B cell (primary cell): ENCODE measurements at regions of chr1 and their contacts with region 1.

Region 1: GRCh38 chr1:223123011-223123610 is 19.9 kb downstream of the TLR5 start:
- DNase-seq: no peak
- ATAC-seq: no peak
- H3K4me3 ChIP-seq: peak overlapping the region in 1 of 5 experiments; percentile 18
- H3K4me3 Mint-ChIP-seq: peak overlapping the region; percentile 27
- H3K27ac ChIP-seq: no peak overlapping the region
- H3K27ac Mint-ChIP-seq: no peak overlapping the region
- H3K4me1 ChIP-seq: peaks cover 4 to 5% of the 10 kb centered on the region in 2 donors
- H3K4me1 Mint-ChIP-seq: peaks cover 6% of the 10 kb centered on the region
- H3K27me3 ChIP-seq: peaks cover 0 to 3% (median 0%) of the 10 kb centered on the region in 4 experiments
- H3K27me3 Mint-ChIP-seq: peaks cover 4% of the 10 kb centered on the region
- CTCF ChIP-seq: no peak

Region 2: DNA sequence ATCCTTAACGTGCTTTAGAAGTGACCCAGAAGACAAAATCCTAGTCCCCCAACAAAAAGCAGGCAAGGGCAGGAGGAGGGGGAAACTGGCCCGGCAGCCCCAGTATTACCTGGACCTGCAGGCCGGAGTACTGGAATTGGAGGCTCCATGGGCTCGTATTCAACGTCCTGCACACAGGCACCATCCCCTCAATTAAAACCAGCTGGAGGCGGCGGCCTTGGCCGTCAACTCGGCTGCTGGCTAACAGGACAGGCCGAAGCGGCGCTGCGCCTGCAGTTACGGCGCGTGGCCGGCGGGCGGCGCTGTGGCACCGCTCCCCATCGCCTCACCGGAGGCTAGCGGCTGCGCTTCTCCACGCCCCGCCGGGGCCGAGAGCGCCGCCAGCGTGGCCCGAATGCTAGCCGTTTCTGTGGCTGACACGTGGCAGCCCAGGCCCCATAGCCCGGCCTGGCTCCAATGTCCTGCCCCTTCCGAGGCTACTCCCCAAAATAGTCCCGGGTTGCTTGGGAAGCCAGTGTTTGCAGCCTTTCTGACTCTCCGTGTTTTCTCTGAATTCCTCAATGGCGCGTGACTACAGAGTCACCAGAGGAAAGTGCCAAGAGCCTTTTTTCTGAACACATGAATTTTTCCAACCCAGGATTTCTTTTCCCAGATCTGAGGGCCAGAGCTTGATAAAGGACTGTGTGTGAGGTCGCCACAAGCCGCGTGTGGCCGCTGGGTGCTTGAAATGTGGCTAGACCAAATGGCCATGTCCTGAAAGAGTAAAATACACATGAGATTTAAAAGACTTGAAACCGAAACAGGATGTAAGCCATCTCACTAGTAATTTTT is 657.7 kb before region 1 on chr1:
- CTCF ChIA-PET with region 1: interaction called, 7 read pairs
- POLR2A ChIA-PET with region 1: no interaction called
- intact Hi-C with region 1: loop called (anchors 2 kb)
- DNase-seq: peak; percentile 92
- ATAC-seq: peak; percentile 95
- H3K4me3 ChIP-seq: peak overlapping the region; percentile 36 to 82 (median 72)
- H3K4me3 Mint-ChIP-seq: peak overlapping the region; percentile 92
- H3K27ac ChIP-seq: peak overlapping the region; percentile 77 to 84
- H3K27ac Mint-ChIP-seq: peak overlapping the region; percentile 96
- H3K4me1 ChIP-seq: peaks cover 3 to 15% of the 10 kb centered on the region in 2 donors
- H3K4me1 Mint-ChIP-seq: peaks cover 13% of the 10 kb centered on the region
- H3K27me3 ChIP-seq: peaks cover 0 to under 1% (median 0%) of the 10 kb centered on the region in 4 experiments
- H3K27me3 Mint-ChIP-seq: peaks cover 13% of the 10 kb centered on the region
- CTCF ChIP-seq: peak; percentile 100

Region 3: GRCh38 chr1:222732216-222733159 is 390.6 kb before region 1 on chr1:
- CTCF ChIA-PET with region 1: interaction called, 10 read pairs
- POLR2A ChIA-PET with region 1: no interaction called
- intact Hi-C with region 1: no loop called
- DNase-seq: peak; percentile 84
- ATAC-seq: peak; percentile 82
- H3K4me3 ChIP-seq: peak overlapping the region in 3 of 5 experiments; percentile 13 to 45 (median 27)
- H3K4me3 Mint-ChIP-seq: peak overlapping the region; percentile 78
- H3K27ac ChIP-seq: peak overlapping the region; percentile 62 to 84
- H3K27ac Mint-ChIP-seq: peak overlapping the region; percentile 93
- H3K4me1 ChIP-seq: peaks cover 56 to 68% of the 10 kb centered on the region in 2 donors
- H3K4me1 Mint-ChIP-seq: peaks cover 56% of the 10 kb centered on the region
- H3K27me3 ChIP-seq: no peaks in the 10 kb centered on the region
- H3K27me3 Mint-ChIP-seq: no peaks in the 10 kb centered on the region
- CTCF ChIP-seq: no peak

Region 4: DNA sequence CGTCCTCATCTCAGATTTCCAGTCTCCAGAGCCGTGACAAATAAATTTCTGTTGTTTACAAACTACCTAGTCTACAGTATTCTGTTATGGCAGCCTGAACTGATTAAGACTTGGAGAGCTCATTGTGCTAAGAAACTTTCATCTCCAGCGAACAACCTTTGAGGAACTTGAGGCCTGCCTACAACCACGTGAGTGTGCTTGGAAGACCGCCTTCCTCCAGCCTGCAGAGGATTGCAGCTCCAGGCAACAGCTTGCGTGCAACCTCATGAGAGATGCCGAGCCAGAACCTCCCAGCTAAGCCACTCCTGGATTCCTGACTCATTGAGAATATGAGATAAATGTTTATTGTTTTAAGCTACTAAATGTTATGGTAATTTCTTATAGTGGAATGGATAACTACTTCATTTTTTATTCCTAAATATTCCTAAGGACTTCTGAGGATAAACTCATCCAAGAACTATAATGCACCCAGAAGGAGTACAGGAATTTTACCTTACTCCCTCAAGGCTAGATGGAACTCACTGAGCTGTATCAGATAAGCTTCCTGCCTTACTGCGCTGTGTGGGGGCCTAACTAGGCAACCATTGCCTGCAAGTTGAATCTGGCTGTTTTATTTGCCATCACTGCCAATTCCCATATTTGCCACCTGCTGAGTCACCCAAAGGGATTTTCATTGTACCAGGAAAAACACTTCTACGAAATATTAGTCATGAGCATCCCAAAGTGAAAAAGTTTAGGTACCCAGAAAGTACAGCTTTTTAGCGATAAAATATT is 368.6 kb before region 1 on chr1:
- CTCF ChIA-PET with region 1: interaction called, 11 read pairs
- POLR2A ChIA-PET with region 1: no interaction called
- intact Hi-C with region 1: no loop called
- DNase-seq: no peak
- ATAC-seq: no peak
- H3K4me3 ChIP-seq: no peak overlapping the region
- H3K4me3 Mint-ChIP-seq: peak overlapping the region; percentile 58
- H3K27ac ChIP-seq: no peak overlapping the region
- H3K27ac Mint-ChIP-seq: peak overlapping the region; percentile 79
- H3K4me1 ChIP-seq: peaks cover 56 to 57% of the 10 kb centered on the region in 2 donors
- H3K4me1 Mint-ChIP-seq: peaks cover 58% of the 10 kb centered on the region
- H3K27me3 ChIP-seq: no peaks in the 10 kb centered on the region
- H3K27me3 Mint-ChIP-seq: no peaks in the 10 kb centered on the region
- CTCF ChIP-seq: no peak

Region 5: DNA sequence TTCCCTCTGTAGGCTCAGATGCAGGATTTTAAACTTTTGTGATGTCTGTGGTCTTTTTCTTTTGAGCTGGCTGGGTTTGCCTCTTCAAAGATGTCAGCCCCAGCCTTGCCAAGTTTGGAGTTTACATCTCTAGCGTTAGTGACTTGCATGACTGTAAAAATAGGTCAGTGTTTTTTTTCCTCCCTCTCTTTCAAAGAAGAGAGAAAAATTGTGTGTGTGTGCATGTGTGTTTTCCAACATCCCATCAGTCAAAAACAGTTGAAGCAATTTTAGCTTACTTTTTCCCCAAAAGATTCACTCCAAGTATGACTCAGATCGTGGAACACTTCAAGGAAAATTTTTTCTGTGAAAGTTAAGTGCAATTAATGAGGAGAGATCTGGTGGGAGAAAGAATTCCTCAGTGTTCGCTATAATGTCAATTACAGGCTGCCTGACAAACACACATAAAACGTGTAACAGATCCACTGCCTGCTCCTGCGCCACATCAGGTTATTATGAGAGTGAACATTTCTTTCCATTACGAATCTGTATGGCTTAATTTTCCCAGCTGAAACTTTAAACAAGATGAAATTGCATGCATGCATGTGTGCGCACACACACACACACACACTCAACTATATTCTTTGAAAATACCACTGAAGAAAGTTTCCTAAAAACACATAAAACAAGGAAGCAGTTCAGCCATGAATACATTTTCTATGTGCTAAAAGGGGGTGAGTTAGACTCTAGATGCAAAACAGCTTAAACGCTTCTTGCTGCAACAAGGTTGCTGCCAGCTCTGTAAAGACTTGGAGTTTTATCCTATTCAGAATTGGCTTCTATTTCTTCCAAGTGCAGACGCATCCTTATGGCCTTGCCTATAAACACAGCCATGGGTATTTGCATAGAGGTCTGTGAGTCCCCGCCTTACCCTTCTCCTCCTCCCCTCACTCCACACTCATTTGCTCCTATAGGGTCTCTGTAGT is 35.5 kb before region 1 on chr1:
- CTCF ChIA-PET with region 1: interaction called, 12 read pairs
- POLR2A ChIA-PET with region 1: no interaction called
- intact Hi-C with region 1: no loop called
- DNase-seq: no peak
- ATAC-seq: no peak
- H3K4me3 ChIP-seq: no peak overlapping the region
- H3K4me3 Mint-ChIP-seq: no peak overlapping the region
- H3K27ac ChIP-seq: no peak overlapping the region
- H3K27ac Mint-ChIP-seq: no peak overlapping the region
- H3K4me1 ChIP-seq: peaks cover 0 to 3% of the 10 kb centered on the region in 2 donors
- H3K4me1 Mint-ChIP-seq: no peaks in the 10 kb centered on the region
- H3K27me3 ChIP-seq: no peaks in the 10 kb centered on the region
- H3K27me3 Mint-ChIP-seq: no peaks in the 10 kb centered on the region
- CTCF ChIP-seq: no peak

Region 6: GRCh38 chr1:223142795-223143536 is 19.9 kb after region 1 on chr1 and contains the start of gene TLR5:
- CTCF ChIA-PET with region 1: interaction called, 94 read pairs
- POLR2A ChIA-PET with region 1: no interaction called
- intact Hi-C with region 1: no loop called
- DNase-seq: peak; percentile 87
- ATAC-seq: peak; percentile 91
- H3K4me3 ChIP-seq: peak within 1 kb of the TSS; percentile 43 to 74 (median 60)
- H3K4me3 Mint-ChIP-seq: peak within 1 kb of the TSS; percentile 77
- H3K27ac ChIP-seq: no peak within 1 kb of the TSS
- H3K27ac Mint-ChIP-seq: no peak within 1 kb of the TSS
- H3K4me1 ChIP-seq: peaks cover 13 to 18% of the 10 kb centered on the region in 2 donors
- H3K4me1 Mint-ChIP-seq: peaks cover 15% of the 10 kb centered on the region
- H3K27me3 ChIP-seq: peaks cover 0 to 18% (median 7%) of the 10 kb centered on the region in 4 experiments
- H3K27me3 Mint-ChIP-seq: peaks cover 22% of the 10 kb centered on the region
- CTCF ChIP-seq: peak; percentile 59
- total RNA-seq, gene TLR5: 0.19 TPM in 1 of 2 replicates, not detected in the other